ENCODE measurements at regions of chr2 and their contacts with region 1.

Region 1: GRCh38 chr2:177717831-177718618 is 325.5 kb downstream of the AGPS start:
- DNase-seq: no peak
- H3K4me3 ChIP-seq: no peak overlapping the region
- H3K27ac ChIP-seq: no peak overlapping the region
- H3K4me1 ChIP-seq: no peaks in the 10 kb centered on the region
- H3K27me3 ChIP-seq: no peaks in the 10 kb centered on the region
- CTCF ChIP-seq: peak in 4 of 6 experiments; percentile 12 to 38 (median 29)
- POLR2A ChIP-seq: no peak

Region 2: DNA sequence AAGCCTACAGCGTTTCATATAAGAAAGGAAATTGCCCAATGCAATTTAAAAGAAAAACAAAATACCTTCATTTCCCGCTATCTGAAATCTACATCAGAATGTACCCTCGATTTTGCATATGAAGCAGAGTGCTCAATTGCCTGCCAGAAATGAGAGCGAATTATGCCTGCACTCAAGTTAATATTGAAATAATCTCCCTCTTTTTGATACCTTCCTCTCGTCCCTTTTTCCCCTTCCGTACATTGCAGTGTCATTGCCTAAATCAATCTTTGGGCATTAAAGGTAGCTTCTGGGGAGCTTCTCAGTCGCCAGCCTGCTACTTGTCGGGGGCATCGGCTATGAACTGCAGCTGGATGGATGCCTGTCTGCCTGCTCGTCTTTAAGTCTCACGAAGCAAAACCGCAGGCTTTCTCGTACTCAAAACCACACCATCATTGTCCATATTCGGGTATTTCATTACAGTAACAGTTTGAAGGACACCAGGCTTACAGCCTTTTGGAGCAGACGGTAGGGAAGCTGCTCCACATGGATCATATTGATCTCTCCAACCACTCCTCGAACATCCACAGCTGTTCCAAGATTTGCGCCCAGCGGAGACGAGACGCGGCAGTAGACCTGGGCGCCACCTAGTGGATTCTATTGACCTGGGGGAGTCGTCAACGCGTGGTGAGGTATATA is 569.4 kb before region 1 on chr2:
- intact Hi-C with region 1: no loop called
- DNase-seq: peak; percentile 70 to 89 (median 82)
- H3K4me3 ChIP-seq: peak overlapping the region in 2 of 4 donors; percentile 13 to 55
- H3K27ac ChIP-seq: no peak overlapping the region
- H3K4me1 ChIP-seq: peaks cover 0 to 6% of the 10 kb centered on the region in 2 donors
- H3K27me3 ChIP-seq: peaks cover 12% of the 10 kb centered on the region
- CTCF ChIP-seq: peak; percentile 51 to 85 (median 71)
- POLR2A ChIP-seq: no peak

Region 3: DNA sequence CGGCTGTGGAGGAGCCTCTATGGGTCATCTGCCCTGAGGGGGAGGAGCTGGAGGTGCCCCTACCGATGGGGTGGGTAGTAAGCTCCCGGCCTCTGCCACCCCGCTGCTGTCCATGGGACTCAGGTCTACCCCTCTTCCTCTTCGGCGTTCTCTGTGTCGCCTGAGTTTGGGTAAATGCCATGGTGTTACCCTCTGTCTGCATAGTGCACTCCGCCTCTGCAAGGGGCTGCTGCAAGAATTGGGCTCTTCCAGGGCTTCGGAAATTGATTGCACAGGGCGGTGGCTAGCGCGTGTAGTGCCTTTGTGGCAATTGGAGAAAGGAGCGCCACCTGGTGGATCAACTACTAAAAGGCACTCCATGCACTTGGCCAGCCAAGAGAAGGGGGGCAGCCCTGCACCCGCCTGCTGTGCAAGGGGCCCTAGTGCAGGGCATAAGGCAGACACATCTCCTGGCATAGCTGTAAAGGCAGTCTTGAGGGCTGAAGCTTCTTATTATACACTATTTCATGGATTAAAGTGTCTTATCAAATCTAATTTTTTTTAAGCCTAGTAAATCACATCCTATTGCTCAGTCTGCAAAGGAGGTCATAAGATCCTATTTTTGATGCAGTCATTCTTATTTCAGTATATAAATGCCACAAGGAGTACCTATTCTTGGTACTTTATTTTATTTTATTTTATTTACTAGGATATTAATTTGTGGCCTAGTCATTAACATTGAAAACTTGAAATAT is 45.7 kb after region 1 on chr2:
- intact Hi-C with region 1: loop called in 1 of 2 experiments (anchors 5 kb)
- DNase-seq: peak; percentile 72 to 90 (median 81)
- H3K4me3 ChIP-seq: no peak overlapping the region
- H3K27ac ChIP-seq: no peak overlapping the region
- H3K4me1 ChIP-seq: no peaks in the 10 kb centered on the region
- H3K27me3 ChIP-seq: no peaks in the 10 kb centered on the region
- CTCF ChIP-seq: peak; percentile 64 to 89 (median 74)
- POLR2A ChIP-seq: no peak

Measured in adrenal gland (tissue), 19 donors.